Calu3 (cell line): ENCODE measurements at regions of chr1 and their contacts with region 1.

Region 1: DNA sequence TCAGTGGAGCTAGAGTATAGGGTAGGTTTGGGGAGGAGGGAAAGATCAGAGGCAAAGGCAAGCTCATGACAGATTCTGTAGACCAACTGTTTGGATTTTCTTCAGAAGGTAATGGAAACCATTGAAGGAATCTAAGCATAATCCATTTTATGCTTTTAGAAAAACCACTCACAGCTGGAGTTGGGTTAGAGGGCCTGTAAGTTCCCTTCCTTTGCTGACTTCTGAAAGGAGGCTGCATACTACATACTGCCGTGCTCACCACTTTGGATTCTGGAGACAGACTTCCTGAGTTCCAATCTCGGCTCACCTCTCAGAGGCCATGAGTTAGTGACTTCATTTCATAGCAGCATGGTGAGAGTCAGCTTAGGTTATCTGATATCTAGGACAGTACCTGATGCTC is 6.4 kb upstream of the SYT2 start:
- DNase-seq: no peak
- H3K4me3 Mint-ChIP-seq: no peak overlapping the region
- H3K27ac Mint-ChIP-seq: no peak overlapping the region
- H3K4me1 Mint-ChIP-seq: peaks cover 10% of the 10 kb centered on the region
- H3K27me3 Mint-ChIP-seq: peaks cover 33% of the 10 kb centered on the region
- CTCF ChIP-seq: no peak

Region 2: DNA sequence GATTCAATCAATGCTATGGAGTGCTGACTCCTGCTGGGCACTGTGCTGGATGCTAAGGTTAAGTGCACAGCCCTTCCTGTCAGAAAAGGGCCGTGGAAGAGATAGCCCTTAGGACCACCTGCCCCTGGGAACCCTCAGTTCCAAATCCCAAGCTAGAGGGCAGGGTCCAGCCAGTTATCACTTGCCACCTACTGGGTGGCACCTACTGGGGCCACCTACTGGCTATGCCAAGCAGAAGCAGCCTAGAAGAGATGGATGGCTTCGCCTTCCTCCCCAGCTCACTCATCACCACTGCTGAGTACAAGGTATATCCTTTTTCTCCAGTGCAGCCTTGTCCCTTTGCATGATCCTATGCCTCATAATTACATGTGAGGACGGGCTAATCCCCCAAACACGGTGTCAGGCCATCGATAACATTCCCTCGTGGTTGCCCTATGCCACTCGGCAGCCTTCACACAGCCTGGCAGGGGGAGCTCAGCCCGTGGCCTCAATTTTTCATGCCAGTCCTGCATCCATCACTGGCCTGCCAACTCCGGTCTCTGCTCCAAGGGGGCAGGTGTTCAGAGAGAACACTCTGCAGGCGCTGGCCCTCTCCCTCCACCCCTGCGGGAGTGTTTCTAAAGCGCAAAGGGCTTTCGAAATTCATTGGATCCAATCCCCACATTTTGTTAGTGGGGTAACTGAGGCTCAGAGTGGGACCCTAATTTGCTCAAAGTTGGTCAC is 55.4 kb before region 1 on chr1:
- CTCF ChIA-PET with region 1: interaction called, 12 read pairs
- intact Hi-C with region 1: no loop called
- DNase-seq: peak; percentile 30
- H3K4me3 Mint-ChIP-seq: no peak overlapping the region
- H3K27ac Mint-ChIP-seq: no peak overlapping the region
- H3K4me1 Mint-ChIP-seq: peaks cover 18% of the 10 kb centered on the region
- H3K27me3 Mint-ChIP-seq: peaks cover 100% of the 10 kb centered on the region
- CTCF ChIP-seq: peak; percentile 64

Region 3: GRCh38 chr1:202692959-202693555 is 23.6 kb before region 1 on chr1:
- CTCF ChIA-PET with region 1: interaction called, 10 read pairs
- intact Hi-C with region 1: no loop called
- DNase-seq: peak; percentile 80
- H3K4me3 Mint-ChIP-seq: no peak overlapping the region
- H3K27ac Mint-ChIP-seq: no peak overlapping the region
- H3K4me1 Mint-ChIP-seq: no peaks in the 10 kb centered on the region
- H3K27me3 Mint-ChIP-seq: peaks cover 100% of the 10 kb centered on the region
- CTCF ChIP-seq: no peak